Right ventricle myocardium inferior (tissue), 1 donor: ENCODE measurements at regions of chr16 and their contacts with region 1.

Region 1: DNA sequence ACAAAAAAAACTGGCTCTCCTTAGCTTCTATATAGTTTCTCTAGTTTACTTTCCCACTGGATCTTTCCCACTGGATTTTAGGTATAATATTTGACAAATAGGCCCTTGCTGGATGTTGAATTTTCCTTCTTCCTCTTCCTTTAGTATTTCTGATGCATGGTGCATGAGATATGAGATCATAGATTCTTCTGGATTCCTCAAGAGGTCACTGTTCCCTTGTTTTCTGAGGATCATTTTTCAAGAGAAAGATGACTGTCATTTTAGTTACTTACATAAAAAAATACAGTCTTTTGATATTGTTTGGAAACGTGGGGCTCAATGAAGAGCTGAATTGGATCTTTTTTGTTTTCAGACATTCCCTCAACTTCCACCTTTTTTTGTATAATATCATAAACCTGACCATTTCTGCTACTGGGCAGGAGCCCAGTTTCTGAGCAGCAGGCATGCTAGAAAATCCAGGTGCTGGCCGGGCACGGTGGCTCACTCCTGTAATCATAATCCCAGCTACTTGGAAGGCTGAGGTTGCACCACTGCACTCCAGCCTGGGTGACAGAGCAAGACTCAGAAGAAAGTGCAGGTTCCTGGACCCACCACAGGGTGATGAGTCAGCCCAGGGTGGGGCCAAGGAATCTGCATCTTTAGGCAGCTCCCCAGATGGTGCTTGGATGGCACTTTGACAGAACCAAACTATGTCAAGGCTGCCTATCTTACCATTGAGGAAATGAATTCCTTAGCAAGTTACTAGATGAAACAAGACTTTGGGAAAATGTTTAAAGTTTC is 70.3 kb downstream of the SDR42E1 start:
- DNase-seq: no peak
- ATAC-seq: no peak

Region 2: DNA sequence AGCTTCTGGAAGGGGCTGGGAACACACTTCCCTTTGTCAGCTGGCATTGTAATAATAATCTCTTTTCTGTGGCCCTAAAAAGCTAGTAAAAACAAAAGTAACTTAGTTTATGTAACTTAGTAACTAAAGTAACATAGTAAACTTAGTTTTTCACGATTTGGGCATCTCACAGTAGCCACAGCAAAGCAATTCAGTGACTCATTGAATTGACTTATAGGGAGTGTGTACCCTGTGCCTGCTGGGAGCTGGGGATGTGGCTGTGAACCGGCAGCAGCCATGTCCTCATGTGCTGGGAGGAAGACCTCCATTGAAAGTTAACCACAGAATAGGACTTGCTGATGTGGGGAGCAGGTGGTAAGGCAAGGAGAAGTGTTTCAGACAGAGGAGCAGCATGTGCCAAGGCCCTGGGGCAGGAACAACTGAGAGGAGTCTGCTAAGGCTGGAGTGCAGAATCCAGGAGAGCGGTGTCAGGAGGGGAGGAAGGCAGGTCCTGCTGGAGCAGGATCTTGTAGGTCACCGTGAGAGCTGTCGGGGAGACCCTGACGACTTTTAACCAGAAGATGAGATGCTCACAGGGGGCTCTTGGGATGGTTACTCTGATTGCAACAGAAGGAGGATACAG is 49.1 kb before region 1 on chr16:
- intact Hi-C with region 1: loop called (anchors 5 kb)
- DNase-seq: no peak
- ATAC-seq: no peak

Region 3: DNA sequence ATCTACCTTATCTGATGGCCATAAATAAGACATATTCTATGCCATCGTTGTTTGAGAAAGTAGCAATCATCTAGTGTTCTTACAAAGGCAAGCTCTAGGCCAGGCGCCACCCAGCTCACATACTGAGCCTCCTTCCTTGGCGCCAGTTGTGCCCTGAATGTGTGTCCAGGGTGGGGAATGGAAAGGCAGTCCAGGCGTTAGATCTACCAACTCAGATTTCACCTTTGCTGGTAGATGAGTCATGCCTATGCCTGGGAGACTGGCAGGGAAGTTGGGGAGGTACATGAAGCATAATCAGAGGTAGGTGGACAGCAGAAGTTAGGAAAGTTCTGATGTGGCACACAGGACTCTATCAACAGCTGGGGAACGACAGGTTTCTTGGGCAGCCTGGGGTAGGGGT is 46.7 kb after region 1 on chr16:
- intact Hi-C with region 1: no loop called
- DNase-seq: no peak
- ATAC-seq: no peak

Region 4: DNA sequence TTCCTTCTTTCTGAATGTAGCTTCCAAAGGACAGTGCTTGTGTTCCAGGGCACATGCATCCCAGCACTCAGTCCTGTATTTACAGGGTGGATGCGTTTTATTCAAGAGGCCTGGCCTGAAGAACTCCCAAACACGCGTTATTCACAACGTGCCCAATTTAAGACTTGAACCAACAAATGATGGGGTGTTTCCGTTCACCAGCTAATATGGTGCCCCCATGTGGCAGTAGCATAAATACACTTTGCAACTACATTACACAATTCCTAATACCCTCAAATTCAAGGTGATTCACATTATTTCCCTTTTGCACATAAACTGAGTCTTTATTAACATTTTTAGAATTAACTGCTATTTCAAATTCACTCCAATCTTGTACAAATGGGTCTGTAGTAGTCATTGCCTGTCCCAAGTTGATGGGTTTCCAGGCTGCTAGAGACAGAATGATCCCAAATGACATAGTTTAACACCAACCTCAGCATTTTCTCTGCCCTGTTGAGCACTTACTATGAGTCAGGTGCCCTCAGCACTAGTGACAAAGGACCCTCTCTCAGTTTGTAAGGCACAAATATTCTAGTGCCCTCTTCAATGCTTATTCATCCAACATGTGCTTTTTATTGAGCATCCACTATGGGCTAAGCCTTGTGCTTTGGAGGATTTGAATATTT is 121.0 kb after region 1 on chr16:
- intact Hi-C with region 1: loop called (anchors 5 kb)
- DNase-seq: no peak
- ATAC-seq: no peak

Region 5: GRCh38 chr16:82169861-82170845 is 229.2 kb after region 1 on chr16 and contains the start of gene MPHOSPH6:
- intact Hi-C with region 1: no loop called
- DNase-seq: peak; percentile 96
- ATAC-seq: peak; percentile 99
- total RNA-seq, gene MPHOSPH6: 9.6 TPM